WTC11 (cell line): ENCODE measurements at regions of chr10 and their contacts with region 1.

Region 1: DNA sequence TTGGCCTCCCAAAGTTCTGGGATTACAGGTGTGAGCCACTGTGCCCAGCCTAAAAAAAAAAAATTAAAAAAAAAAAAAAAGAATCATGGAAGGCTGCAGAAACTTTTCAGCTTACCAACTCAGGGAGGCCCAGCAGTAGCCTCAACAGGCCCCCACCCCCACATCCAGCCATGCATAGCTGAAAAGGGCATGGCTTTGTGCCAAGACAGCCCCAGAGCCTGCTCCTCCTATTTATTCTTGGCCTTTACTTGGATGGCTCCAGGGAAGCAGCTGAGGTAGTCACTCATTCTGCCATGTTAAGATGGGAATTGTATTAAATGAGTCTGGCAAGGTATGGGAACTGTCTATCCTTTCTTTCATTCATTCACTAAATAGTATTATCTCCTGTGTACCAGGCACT is 13.7 kb upstream of the CNNM2 start:
- DNase-seq: no peak
- ATAC-seq: no peak
- H3K4me3 Mint-ChIP-seq: no peak overlapping the region
- H3K27ac Mint-ChIP-seq: no peak overlapping the region
- H3K4me1 Mint-ChIP-seq: peaks cover 3% of the 10 kb centered on the region; the same call in 1 of the 2 replicates
- H3K27me3 Mint-ChIP-seq: no peaks in the 10 kb centered on the region
- CTCF ChIP-seq: no peak

Region 2: GRCh38 chr10:102835007-102835482 is 69.3 kb before region 1 on chr10:
- CTCF ChIA-PET with region 1: interaction called, 40 read pairs
- POLR2A ChIA-PET with region 1: no interaction called
- DNase-seq: peak; percentile 89
- ATAC-seq: peak; percentile 99
- H3K4me3 Mint-ChIP-seq: no peak overlapping the region
- H3K27ac Mint-ChIP-seq: no peak overlapping the region
- H3K4me1 Mint-ChIP-seq: 0 out of 2 replicates have a peak, but pooled peaks cover 5% of the 10 kb centered on the region
- H3K27me3 Mint-ChIP-seq: peaks cover 18% of the 10 kb centered on the region
- CTCF ChIP-seq: peak; percentile 89

Region 3: GRCh38 chr10:102841827-102842345 is 62.5 kb before region 1 on chr10:
- CTCF ChIA-PET with region 1: interaction called, 40 read pairs
- POLR2A ChIA-PET with region 1: no interaction called
- DNase-seq: no peak
- ATAC-seq: no peak
- H3K4me3 Mint-ChIP-seq: no peak overlapping the region
- H3K27ac Mint-ChIP-seq: no peak overlapping the region
- H3K4me1 Mint-ChIP-seq: no peaks in the 10 kb centered on the region; the same call in 1 of the 2 replicates
- H3K27me3 Mint-ChIP-seq: peaks cover 25% of the 10 kb centered on the region
- CTCF ChIP-seq: no peak

Region 4: DNA sequence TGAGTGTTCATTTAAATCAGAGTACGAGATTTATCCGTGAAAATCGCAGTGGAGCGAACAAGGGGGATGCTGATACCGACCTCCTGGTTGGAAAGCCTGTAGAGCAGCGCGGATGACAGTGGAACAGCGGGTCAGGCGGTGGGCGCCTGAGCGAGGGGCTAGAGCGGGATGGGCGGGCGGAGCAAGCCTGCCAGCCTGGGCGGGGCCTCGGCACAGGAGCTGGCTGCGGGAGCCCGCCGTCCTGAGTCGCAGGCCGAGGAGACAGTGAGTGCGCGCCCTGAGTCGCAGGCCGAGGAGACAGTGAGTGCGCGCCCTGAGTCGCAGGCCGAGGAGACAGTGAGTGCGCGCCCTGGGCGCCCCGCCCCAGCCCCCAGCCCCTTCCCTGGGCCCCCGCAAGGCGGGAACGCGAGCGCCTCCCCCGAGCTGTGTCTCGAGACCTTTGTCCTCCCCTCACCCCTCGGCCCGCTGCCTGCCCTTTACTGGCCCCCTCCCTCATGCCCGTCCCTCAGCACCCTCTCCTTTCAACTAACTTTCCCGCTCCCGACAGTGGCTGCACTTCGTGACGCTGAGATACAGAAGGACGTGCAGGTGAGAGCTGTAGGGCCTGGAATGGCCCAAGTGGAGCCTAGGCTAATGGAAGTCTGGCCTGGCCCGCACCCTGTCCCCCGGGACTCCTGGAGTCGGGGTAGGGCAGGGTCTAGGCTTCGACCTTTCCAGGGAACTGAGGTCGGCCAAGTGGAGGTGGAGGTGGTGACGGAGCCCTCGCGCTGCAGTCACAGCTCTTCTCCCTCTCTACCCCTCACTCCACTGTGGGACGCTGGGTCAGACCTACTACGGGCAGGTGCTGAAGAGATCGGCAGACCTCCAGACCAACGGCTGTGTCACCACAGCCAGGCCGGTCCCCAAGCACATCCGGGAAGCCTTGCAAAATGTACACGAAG is 34.8 kb before region 1 on chr10 and contains the start of gene AS3MT:
- CTCF ChIA-PET with region 1: interaction called, 11 read pairs
- POLR2A ChIA-PET with region 1: interaction called, 3 read pairs
- DNase-seq: peak; percentile 84
- ATAC-seq: peak; percentile 97
- H3K4me3 Mint-ChIP-seq: peak within 1 kb of the TSS; percentile 96
- H3K27ac Mint-ChIP-seq: peak within 1 kb of the TSS; percentile 84; the same call in 1 of the 2 replicates
- H3K4me1 Mint-ChIP-seq: peaks cover 16% of the 10 kb centered on the region
- H3K27me3 Mint-ChIP-seq: peaks cover 12% of the 10 kb centered on the region
- CTCF ChIP-seq: no peak
- total RNA-seq, gene AS3MT: 8.8 to 10.4 TPM (median 9.3 TPM) in 3 replicates